Dendritic cell treated with granulocyte-macrophage colony-stimulating factor and Interleukin-4, amounts not matched to agents 40 ng/mL and 50 ng/mL, for 4 days (primary cell): ENCODE measurements at regions of chr14 and their contacts with region 1.

Region 1: DNA sequence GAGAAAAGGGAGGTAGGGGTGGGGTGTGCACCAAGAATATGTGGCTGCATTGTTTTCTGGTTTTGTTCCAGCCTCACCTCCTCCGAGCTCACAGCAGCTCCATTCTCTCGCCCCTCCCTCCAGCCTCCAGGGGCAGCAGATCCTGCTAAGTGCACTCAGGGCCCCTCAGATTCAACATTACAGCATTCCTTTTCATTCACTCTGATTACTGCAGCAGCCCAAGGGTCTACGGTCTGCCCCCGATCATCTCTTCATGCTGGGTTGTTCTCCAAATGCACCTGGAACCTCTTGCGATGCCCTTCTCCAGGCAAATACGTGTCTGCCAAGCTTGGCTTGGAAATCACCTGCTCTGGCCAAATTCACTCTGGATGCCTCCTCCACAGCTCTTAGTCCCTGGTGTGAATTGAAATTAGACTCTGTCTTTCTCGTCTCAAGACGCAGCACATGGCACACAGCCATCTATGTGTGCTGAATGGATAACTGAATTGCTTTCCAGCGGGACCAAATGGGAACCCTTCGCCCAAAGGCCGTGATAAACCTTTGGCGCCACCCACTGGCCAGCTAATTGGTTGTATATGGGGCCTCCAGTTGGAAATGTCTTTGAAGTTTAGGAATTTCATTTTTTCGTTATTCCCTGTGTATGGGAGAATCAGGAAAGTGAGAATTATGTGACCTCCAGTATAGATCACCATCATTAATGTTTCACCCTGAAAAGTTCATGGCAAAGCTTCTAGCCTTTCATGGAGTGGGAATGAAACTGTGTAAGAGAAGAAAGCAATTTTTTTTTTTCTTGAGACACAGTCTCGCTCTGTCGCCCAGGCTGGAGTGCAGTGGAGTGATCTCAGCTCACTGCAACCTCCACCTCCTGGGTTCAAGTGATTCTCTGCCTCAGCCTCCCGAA is 9.6 kb upstream of the HSP90AA1 start:
- H3K4me3 Mint-ChIP-seq: no peak overlapping the region
- H3K27ac Mint-ChIP-seq: no peak overlapping the region
- H3K4me1 Mint-ChIP-seq: peaks cover 24% of the 10 kb centered on the region
- H3K27me3 Mint-ChIP-seq: peaks cover 22% of the 10 kb centered on the region

Region 2: DNA sequence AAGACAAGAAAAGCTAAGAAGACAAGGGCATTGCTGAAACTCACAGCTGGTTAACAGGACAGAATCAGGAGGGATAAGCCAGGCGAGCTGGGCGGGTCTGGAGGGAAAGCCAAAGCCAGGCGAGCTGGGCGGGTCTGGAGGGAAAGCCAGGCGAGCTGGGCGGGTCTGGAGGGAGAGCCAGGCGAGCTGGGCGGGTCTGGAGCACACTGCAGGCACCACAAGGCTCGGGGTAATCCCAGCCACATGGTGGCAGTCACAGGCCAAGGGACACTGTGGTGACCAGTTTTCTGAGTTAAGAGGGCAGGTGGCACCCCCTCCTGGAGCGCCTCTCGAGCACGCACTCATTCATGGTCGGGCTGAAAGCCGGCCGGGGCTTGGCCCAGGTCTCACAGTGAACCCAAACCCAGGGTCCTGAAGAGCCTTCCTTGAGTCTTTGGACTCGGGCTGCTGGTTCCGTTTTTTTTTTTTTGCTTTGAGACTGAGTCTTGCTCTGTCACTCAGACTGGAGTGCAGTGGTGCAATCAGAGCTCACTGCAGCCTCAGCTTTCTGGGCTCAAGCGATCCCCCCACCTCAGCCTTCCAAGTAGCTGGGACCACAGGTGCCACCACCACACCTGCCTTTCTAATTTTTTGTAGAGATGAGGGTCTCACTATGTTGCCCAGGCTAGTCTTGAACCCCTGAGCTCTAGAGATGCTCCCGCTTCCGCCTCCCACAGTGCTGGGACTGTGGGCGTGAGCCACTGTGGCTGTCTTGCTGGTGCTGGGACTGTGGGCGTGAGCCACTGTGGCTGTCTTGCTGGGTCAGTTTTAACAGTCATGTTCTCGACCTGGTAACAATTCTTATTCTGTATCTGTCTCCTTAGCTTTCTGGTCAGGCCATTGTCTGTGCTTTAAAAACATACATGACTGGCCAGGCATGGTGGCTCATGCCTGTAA is 49.9 kb before region 1 on chr14:
- intact Hi-C with region 1: loop called (anchors 10 kb)
- H3K4me3 Mint-ChIP-seq: no peak overlapping the region
- H3K27ac Mint-ChIP-seq: no peak overlapping the region
- H3K4me1 Mint-ChIP-seq: no peaks in the 10 kb centered on the region
- H3K27me3 Mint-ChIP-seq: no peaks in the 10 kb centered on the region

Region 3: DNA sequence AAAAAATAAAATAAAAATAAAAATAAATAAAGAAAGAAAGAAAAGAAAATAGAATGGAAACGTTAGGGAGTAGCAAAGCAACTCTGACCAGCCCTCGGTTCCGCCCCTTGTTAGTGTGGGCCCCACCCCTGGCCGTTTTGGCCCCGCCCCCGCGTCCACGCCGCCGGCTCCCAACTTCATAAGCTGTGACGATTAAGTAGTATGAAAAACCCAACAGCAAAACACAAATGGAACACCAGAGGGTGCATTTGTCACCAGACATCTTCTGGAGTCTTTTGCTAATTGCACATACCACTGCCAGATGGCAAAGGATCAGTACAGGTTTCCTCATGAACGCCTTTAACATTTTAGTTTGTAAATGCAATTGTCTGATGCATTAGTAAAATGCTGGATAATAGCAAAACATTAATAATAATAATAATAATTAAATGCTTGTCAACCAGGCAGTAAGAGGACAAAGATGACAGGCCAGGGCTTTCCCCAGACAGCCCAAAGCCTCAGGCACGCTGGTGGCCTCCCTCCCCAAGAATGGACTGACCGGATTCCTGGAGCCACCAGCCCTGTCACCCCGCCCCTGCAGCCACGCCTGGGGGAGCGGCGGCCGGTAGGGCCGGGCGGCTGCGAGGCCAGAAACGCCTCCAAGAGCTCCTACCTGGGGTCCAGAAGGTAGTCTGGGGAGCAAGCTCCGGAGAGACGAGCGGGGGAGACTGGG is 33.2 kb before region 1 on chr14:
- intact Hi-C with region 1: loop called (anchors 1 kb)
- H3K4me3 Mint-ChIP-seq: no peak overlapping the region
- H3K27ac Mint-ChIP-seq: no peak overlapping the region
- H3K4me1 Mint-ChIP-seq: no peaks in the 10 kb centered on the region
- H3K27me3 Mint-ChIP-seq: peaks cover 7% of the 10 kb centered on the region